ENCODE measurements at regions of chr5 and their contacts with region 1.

Region 1: DNA sequence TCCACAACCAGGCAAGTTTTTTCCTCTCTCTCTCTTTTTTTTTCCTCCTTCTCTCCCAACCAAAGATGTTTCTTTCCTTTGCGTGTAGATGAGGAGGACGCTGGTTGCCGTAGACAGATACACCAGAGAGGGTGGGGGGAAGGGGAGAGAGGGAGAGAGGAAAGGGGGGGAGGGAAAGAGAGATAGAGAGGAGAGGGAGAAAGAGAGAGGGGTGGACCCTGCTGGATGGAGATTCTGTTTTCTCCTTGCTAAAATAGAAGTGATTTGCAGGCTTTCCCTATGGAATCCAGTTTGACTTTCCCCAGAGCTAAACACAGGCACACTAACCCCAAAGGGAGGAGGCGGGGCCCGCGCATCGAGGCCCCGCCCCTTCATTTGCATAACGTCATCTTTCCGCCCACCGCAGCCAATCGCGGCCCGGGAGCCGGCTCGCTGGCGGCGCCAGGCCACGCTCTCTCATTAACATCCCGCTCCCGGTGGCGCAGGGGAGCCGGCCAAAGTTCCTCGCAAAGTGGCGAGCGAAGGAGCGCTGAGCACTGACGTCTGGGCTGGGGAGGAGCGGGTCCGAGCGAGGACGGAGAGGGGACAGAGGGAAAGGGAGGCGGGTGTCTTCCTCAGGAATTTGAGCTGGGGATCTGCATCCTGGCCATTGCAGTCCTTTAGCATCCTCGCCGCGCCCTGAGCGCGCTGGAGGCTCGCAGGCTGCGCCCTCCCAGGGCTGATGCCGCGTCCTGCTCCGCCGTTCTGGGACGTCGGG is 487 bp upstream of the EBF1 start:
- DNase-seq: peak; percentile 94
- ATAC-seq: peak; percentile 92

Region 2: GRCh38 chr5:158695595-158696330 is 404.4 kb before region 1 on chr5:
- intact Hi-C with region 1: loop called (anchors 5 kb)
- DNase-seq: peak; percentile 86
- ATAC-seq: peak; percentile 71

Region 3: DNA sequence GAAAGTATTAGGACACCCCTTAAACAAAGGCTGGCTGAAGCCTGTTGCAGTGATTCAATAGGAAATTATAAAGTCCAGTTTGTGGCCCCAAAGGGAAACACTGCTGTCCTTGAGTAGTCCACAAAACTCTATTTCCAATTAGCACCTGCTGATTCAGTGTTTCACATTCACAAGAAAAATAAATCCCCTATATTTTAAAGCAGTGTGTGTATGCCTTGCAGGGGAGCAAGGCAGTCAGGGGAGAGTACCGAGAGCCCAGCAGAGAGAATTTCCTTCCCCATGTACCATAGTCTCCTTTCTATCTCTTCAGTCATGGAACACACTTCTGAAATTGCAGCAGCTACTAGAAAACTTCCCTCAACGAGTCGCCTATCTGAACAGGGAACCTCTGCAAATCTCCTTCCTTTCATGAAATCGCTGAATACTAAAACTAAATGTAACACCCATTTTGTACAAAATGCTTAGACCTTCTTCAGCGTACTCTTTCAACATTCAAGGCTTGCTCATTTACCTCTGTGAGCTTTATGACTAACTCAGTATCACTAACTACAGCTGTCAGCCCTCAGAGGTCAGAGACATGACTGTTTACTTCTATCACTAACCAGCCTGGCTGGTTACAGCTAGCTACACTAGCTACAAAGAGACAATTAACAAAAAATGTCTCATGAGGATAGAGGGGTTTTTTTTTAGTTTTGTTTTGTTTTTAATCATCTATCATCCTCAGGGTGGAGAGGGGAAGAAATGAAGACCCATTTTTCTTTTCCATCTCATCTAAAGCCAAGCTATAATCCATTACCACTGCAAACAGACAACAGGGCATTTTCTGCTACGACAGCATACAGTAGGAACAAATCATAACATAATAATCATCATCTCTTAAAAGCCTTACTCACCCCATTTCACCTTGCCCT is 189.2 kb before region 1 on chr5:
- intact Hi-C with region 1: no loop called
- DNase-seq: no peak
- ATAC-seq: no peak

Region 4: GRCh38 chr5:159034083-159034824 is 65.9 kb before region 1 on chr5:
- intact Hi-C with region 1: no loop called
- DNase-seq: no peak
- ATAC-seq: peak; percentile 60

Region 5: GRCh38 chr5:159209438-159210305 is 109.5 kb after region 1 on chr5 and contains the start of gene RNF145:
- intact Hi-C with region 1: no loop called
- DNase-seq: peak; percentile 95
- ATAC-seq: peak; percentile 79
- total RNA-seq, gene RNF145: 23.3 TPM